Activated CD8-positive, alpha-beta T cell treated with anti-CD3 and anti-CD28 coated beads, Interleukin-2, amount 10 ng/mL, durations not matched to agents 7 days and 5 days (primary cell): ENCODE measurements at regions of chr7 and their contacts with region 1.

Region 1: DNA sequence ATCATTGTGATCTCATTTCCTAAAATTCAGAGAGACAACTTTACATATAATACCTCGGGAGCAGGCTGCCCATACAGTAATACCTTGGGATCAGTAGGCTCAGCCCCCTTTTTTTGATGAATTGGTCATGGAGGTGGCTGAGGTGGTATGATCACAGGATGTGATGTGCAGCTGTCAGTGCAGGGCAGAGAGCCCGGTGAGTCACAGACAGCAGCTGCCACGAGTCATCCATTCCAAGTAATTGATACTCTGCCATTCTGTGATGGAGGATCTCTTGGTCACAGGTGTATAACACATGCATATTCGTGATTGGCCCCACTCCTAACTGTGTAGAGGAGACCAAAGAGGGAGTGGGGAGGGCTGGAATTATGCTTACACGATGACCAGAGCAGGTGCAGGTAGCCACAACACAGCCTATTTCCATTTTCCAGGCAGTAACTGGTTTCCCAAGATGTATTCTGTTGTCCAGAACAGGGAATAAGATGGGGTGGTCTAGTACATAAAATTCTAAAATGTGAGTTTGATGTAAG is 14.1 kb downstream of the NRCAM start:
- DNase-seq: peak; percentile 35
- ATAC-seq: no peak
- H3K4me3 Mint-ChIP-seq: no peak overlapping the region
- H3K27ac Mint-ChIP-seq: no peak overlapping the region
- H3K4me1 Mint-ChIP-seq: peaks cover 8% of the 10 kb centered on the region
- H3K27me3 Mint-ChIP-seq: no peaks in the 10 kb centered on the region

Region 2: DNA sequence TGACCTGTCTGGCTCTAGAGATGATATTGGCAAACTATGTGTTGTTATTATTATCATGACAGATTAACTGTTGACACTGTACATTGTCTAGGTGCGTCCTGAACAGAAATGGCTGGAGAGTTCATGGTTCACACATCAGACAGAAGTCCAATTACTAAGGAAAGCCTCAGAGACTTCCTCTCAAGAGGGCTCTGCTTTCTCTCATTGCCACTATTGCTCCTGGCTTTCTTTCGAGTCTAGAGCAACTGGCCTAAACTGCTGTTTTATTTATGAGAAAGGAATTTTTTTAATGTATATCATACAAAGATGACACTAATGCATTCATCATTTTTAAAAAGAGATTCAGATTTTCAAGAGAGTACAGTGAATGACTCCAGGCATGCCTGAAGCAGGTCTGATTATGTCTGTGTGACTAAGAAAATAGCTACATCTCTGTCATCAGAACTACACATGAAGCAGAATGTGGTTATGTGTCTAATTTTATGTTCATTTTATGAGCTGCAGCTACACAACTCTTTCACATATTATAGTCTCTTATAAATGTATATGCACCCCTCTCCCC is 16.3 kb before region 1 on chr7:
- CTCF ChIA-PET with region 1: no interaction called
- POLR2A ChIA-PET with region 1: no interaction called
- DNase-seq: no peak
- ATAC-seq: no peak
- H3K4me3 Mint-ChIP-seq: no peak overlapping the region
- H3K27ac Mint-ChIP-seq: no peak overlapping the region
- H3K4me1 Mint-ChIP-seq: peaks cover 6% of the 10 kb centered on the region
- H3K27me3 Mint-ChIP-seq: peaks cover under 1% of the 10 kb centered on the region

Region 3: GRCh38 chr7:108452722-108453121 is 10.6 kb after region 1 on chr7:
- CTCF ChIA-PET with region 1: interaction called, 34 read pairs
- POLR2A ChIA-PET with region 1: no interaction called
- DNase-seq: peak; percentile 34
- ATAC-seq: peak; percentile 34
- H3K4me3 Mint-ChIP-seq: no peak overlapping the region
- H3K27ac Mint-ChIP-seq: no peak overlapping the region
- H3K4me1 Mint-ChIP-seq: peaks cover 13% of the 10 kb centered on the region
- H3K27me3 Mint-ChIP-seq: peaks cover 37% of the 10 kb centered on the region

Region 4: DNA sequence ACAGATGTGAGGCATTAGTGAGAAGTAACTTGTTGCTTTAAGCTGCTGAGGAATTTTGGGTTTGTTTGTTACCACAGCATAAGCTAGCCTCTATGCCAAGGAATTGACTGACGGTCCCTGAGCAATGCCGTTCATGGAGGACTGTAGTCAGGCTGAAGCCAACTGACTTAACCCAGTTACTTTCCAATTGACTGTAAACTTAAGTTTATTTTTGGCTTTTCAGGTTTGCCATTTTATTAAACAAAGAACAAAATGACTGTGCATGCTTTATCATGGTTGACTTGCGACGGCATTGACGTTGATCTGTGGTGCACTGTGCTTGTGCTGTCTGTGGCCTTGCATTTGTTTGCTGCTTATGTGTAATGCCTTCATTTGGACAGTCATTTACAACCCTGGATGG is 181.1 kb after region 1 on chr7:
- CTCF ChIA-PET with region 1: no interaction called
- POLR2A ChIA-PET with region 1: no interaction called
- DNase-seq: no peak
- ATAC-seq: no peak
- H3K4me3 Mint-ChIP-seq: no peak overlapping the region
- H3K27ac Mint-ChIP-seq: no peak overlapping the region
- H3K4me1 Mint-ChIP-seq: no peaks in the 10 kb centered on the region
- H3K27me3 Mint-ChIP-seq: peaks cover 8% of the 10 kb centered on the region